ENCODE measurements at regions of chr3 and their contacts with region 1.

Region 1: DNA sequence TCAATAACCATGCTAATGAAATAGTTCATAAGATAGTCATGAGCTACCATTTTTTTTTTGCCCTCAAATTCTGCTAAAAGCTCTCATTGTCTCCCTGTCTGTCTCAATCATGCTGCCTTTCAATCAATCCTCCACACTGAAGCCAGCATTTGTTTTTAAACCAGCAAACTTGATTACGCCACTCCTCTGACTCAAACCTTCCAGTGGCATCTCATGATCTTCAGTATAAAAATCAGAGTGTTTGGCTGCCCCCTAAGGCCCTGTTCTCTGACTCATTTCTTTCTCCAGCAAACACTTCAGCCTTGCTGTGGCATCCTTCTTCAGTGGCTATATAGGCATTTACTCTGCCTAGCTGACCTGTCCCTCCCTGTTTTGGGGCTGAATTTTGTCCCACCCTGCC is 36.0 kb upstream of the EOMES start:
- DNase-seq: no peak
- H3K4me3 Mint-ChIP-seq: no peak overlapping the region
- H3K27ac Mint-ChIP-seq: peak overlapping the region; percentile 72
- H3K4me1 Mint-ChIP-seq: peaks cover 23% of the 10 kb centered on the region
- H3K27me3 Mint-ChIP-seq: peaks cover 3% of the 10 kb centered on the region

Region 2: GRCh38 chr3:27686642-27687041 is 71.4 kb before region 1 on chr3:
- intact Hi-C with region 1: no loop called
- DNase-seq: no peak
- H3K4me3 Mint-ChIP-seq: no peak overlapping the region
- H3K27ac Mint-ChIP-seq: no peak overlapping the region
- H3K4me1 Mint-ChIP-seq: no peaks in the 10 kb centered on the region
- H3K27me3 Mint-ChIP-seq: peaks cover 13% of the 10 kb centered on the region

Region 3: DNA sequence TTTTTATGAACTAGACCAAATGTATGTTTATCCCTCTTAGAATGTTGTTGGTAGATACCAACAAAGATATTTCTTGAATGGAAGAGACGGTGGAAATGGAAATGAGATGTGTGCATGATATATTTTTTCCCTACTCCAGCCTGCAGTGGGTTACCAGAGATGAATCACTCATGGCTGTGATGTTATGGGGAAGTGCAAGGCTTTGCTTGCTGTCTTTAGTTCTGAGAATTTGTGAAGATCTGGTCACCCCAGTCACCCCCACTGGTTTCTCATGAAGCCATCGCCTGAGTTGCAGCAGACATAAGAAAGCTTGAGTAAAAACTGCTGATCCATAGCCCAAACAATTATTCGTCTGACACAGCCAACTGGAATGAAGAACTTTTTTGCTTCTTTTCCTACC is 42.2 kb after region 1 on chr3:
- intact Hi-C with region 1: loop called (anchors 2 kb)
- DNase-seq: no peak
- H3K4me3 Mint-ChIP-seq: no peak overlapping the region
- H3K27ac Mint-ChIP-seq: peak overlapping the region; percentile 0
- H3K4me1 Mint-ChIP-seq: peaks cover 17% of the 10 kb centered on the region
- H3K27me3 Mint-ChIP-seq: no peaks in the 10 kb centered on the region

Region 4: GRCh38 chr3:27840807-27841594 is 82.9 kb after region 1 on chr3:
- intact Hi-C with region 1: loop called (anchors 5 kb)
- DNase-seq: no peak
- H3K4me3 Mint-ChIP-seq: no peak overlapping the region
- H3K27ac Mint-ChIP-seq: no peak overlapping the region
- H3K4me1 Mint-ChIP-seq: peaks cover 5% of the 10 kb centered on the region
- H3K27me3 Mint-ChIP-seq: no peaks in the 10 kb centered on the region

Region 5: GRCh38 chr3:28308196-28308595 is 550.1 kb after region 1 on chr3:
- intact Hi-C with region 1: no loop called
- DNase-seq: no peak
- H3K4me3 Mint-ChIP-seq: no peak overlapping the region
- H3K27ac Mint-ChIP-seq: no peak overlapping the region
- H3K4me1 Mint-ChIP-seq: no peaks in the 10 kb centered on the region
- H3K27me3 Mint-ChIP-seq: no peaks in the 10 kb centered on the region